ENCODE measurements at regions of chr10 and their contacts with region 1.

Region 1: DNA sequence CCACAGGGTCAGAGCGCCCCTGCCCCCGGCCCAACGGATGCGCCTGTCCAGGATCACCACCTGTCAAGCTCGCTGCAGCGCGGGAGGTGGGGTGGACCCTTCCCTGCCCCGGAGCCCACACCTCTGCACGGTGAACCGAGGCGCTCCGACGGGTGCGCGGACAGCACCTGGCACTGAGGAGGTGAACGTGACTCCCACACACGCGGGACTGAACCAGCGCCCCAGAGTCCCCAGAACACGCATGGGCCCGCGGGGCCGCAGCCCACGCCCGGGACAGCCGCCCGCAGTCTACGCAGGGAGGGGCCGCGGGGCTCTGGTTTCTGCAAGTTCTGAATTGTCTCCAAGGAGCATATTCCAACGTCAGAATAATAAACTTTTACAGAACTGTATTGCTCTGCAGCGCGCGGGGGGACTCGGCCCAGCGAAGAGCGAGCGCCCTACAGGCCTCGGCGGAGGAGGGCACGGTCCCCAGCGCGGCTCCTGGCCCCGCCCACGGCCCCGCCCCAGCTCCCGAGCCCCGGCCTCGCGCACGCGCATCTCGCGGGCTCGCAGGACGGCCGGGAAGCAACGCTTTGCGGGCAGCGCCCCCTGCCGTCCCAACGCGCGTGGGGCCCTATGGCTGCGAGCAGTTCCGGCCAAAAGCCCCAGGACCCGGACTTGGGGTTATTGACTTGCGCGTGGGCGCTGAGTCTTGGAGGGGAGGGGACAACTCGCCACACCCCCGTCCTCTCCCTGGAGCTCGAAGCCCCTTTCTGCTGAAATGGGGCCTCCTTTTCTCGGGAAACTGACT is 29.7 kb downstream of the OAT start:
- DNase-seq: peak; percentile 93
- H3K4me3 ChIP-seq: peak overlapping the region; percentile 35 to 55 (median 50)
- H3K27ac ChIP-seq: peak overlapping the region; percentile 50 to 72 (median 68)
- H3K4me1 ChIP-seq: peaks cover 0 to 15% (median 11%) of the 10 kb centered on the region in 4 donors
- H3K27me3 ChIP-seq: no peaks in the 10 kb centered on the region
- CTCF ChIP-seq: peak; percentile 78 to 97 (median 86)
- EP300 ChIP-seq: no peak
- POLR2A ChIP-seq: no peak

Region 2: GRCh38 chr10:123582084-123582989 is 806.7 kb before region 1 on chr10:
- intact Hi-C with region 1: loop called (anchors 5 kb)
- DNase-seq: peak; percentile 89
- H3K4me3 ChIP-seq: no peak overlapping the region
- H3K27ac ChIP-seq: no peak overlapping the region
- H3K4me1 ChIP-seq: peaks cover 0 to 25% (median 18%) of the 10 kb centered on the region in 4 donors
- H3K27me3 ChIP-seq: no peaks in the 10 kb centered on the region
- CTCF ChIP-seq: peak; percentile 72 to 85 (median 76)
- EP300 ChIP-seq: no peak
- POLR2A ChIP-seq: no peak

Region 3: DNA sequence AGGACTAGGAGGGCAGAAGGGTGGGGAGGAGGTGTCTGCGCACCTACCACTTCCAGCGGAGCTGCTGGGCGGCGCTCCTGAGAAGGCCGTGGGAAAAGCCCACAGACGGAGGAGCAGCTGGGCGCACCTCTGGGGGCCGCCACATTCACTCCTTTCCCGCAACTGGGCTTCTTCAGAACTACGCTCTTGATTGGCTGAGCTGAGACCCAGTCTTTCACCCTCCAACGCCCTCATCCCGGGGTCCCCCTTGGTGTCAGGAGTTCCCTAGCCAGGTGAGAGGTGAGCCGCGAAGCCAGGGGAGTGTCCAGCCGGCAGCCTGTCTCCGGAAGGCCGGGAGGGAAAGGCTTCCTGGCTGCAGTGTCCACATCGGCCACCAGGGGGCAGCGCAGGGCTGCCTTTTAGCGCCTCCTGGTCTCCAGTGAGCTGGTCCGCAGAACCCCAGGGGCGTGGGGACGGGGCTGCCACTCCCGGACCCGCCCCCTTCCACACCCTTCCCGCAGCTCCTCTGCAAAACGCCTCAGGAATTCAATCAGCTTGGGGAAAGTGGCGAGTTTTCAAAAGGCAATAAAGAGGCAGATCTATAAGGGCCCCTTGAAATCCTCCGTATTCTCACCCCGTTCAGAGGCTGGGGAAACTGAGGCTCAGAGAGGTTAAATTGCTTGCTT is 394.5 kb before region 1 on chr10:
- intact Hi-C with region 1: loop called (anchors 1 kb)
- DNase-seq: peak; percentile 93
- H3K4me3 ChIP-seq: peak overlapping the region in 3 of 4 donors; percentile 21 to 35 (median 22)
- H3K27ac ChIP-seq: peak overlapping the region in 3 of 4 donors; percentile 60 to 71 (median 69)
- H3K4me1 ChIP-seq: peaks cover 0 to 31% (median 26%) of the 10 kb centered on the region in 4 donors
- H3K27me3 ChIP-seq: peaks cover 13 to 39% (median 18%) of the 10 kb centered on the region in 3 donors
- CTCF ChIP-seq: peak; percentile 96 to 100 (median 99)
- EP300 ChIP-seq: no peak
- POLR2A ChIP-seq: no peak

Region 4: DNA sequence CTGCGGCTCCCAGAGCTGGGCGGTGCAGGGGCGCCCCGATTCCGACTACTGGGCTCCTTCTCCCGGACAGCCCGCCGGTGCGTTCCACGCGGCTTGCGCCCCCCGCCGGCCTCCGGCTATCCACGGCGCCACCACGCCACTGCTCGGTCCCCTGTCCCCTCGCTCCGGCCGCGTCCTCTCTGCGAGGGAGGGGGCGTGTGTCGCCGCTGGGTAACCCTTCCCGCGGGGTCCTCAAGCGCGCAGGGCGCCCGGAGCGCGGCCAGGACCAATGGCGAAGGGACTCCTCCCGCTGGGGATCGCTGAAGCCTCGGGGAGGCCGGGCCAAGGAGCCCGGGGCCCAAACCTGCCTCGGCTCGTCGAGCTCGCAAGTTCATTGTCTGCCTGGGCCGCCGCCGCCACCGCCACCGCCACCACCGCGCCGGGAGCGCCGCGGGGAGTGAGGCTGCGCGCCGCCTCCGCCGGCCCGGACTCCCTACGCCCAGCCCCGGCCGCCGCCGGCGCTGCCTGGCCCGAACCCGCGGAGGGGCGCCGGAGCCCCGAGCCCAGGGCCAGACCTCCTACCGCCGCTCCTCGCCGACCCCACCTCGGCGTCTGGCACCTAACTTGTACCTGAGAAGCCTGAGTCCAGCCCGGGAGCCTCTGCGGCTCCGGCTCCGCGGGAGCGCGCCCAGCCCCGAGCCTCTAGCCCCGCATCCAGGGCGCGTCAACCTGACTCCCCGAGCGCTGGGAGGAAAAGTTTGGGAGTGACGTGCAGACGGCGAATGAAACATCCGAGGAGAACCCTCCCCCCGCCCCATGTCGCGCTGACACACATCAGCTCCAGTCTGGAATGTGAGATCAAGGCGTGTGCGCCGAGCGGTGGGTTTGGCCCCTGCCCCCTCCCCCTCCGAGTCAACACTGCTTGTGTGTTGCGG is 295.9 kb before region 1 on chr10 and contains the start of gene CHST15:
- intact Hi-C with region 1: loop called (anchors 2 kb)
- DNase-seq: peak; percentile 89
- H3K4me3 ChIP-seq: peak within 1 kb of the TSS; percentile 59 to 73 (median 66)
- H3K27ac ChIP-seq: peak within 1 kb of the TSS; percentile 90 to 93 (median 91)
- H3K4me1 ChIP-seq: peaks cover 0 to 60% (median 54%) of the 10 kb centered on the region in 4 donors
- H3K27me3 ChIP-seq: no peaks in the 10 kb centered on the region
- CTCF ChIP-seq: peak in 1 of 4 experiments; percentile 22
- EP300 ChIP-seq: no peak
- POLR2A ChIP-seq: peak; percentile 47 to 76
- total RNA-seq, gene CHST15: 29.9 to 57.9 (median 43.8) TPM